Right lobe of liver (tissue), 6 donors: ENCODE measurements at regions of chr7 and their contacts with region 1.

Region 1: GRCh38 chr7:134613623-134614347 is 32.9 kb upstream of the BPGM start:
- DNase-seq: no peak
- ATAC-seq: peak; percentile 39 to 73 (median 44)
- H3K4me3 ChIP-seq: no peak overlapping the region
- H3K27ac ChIP-seq: no peak overlapping the region
- H3K4me1 ChIP-seq: no peaks in the 10 kb centered on the region
- H3K27me3 ChIP-seq: no peaks in the 10 kb centered on the region
- CTCF ChIP-seq: no peak
- POLR2A ChIP-seq: no peak

Region 2: DNA sequence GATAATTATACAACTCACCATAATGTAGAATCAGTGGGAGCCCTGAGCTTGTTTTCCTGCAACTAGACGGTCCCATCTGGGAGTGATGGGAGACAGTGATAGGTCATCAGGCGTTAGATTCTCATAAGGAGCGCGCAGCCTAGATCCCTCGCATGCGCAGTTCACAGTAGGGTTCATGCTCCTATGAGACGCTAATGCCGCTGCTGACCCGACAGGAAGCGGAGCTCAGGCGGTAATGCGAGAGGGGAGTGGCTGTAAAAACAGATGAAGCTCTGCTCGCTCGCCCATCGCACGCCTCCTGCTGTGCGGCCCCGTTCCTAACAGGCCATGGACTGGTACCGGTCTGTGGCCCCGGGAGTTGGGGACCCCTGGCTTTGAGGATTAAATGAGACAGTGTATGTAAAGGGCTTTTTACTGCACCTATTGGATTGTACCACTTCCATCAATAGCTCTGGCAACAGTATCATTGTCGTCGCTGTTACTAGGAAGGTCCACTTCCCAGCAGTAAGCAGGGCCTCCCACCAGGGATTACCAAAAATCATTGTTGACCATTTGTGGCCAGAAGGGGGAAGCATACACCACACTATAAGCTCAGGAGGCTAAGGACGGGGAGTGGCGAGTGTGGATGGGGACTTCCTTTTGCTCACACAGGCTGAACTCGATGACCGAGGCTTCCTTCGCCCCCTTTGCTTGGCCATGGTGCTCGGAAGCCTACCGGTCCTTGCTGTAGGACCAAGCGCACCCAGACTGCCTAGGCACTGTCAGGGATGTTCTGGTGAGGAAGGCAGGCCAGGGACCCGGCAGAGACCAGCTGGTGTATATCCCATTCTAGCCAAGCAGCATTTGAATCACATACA is 181.3 kb before region 1 on chr7:
- intact Hi-C with region 1: loop called in 1 of 2 experiments (anchors 10 kb)
- DNase-seq: peak; percentile 82 to 88 (median 85)
- ATAC-seq: peak; percentile 96 to 99 (median 97)
- H3K4me3 ChIP-seq: peak overlapping the region; percentile 12 to 34 (median 15)
- H3K27ac ChIP-seq: peak overlapping the region in 2 of 3 donors; percentile 20 to 79
- H3K4me1 ChIP-seq: no peaks in the 10 kb centered on the region
- H3K27me3 ChIP-seq: no peaks in the 10 kb centered on the region
- CTCF ChIP-seq: peak; percentile 67 to 90 (median 72)
- POLR2A ChIP-seq: peak; percentile 44

Region 3: DNA sequence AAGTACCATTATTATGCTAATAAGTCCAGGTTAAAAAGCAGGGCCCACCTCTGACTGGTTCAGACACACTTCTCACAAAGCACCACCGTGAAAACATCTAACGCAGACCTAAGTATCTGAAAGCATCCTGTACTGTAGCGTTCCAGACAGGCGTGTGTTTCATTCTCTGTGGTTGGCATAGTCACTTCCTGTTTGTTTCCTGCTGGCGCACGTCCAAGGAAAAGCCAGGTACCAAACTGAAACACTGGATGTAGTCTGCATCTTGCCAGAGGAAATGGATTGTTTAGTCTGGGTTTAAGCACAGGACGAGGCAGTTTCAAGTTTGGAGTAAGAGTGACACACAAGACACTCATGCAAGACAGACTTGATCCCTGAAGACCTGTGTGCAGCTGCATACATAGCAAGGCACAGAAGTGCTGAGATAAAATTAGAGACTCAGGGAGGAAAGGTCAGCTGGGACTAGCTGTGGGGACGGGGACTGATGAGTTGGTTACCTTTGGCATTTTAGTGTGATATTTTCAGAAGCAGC is 56.1 kb after region 1 on chr7:
- intact Hi-C with region 1: no loop called
- DNase-seq: peak in 1 of 3 donors; percentile 42
- ATAC-seq: peak in 3 of 4 donors; percentile 36 to 60 (median 57)
- H3K4me3 ChIP-seq: no peak overlapping the region
- H3K27ac ChIP-seq: no peak overlapping the region
- H3K4me1 ChIP-seq: no peaks in the 10 kb centered on the region
- H3K27me3 ChIP-seq: no peaks in the 10 kb centered on the region
- CTCF ChIP-seq: no peak
- POLR2A ChIP-seq: no peak